Activated CD8-positive, alpha-beta T cell treated with anti-CD3 and anti-CD28 coated beads for 36 hours (primary cell): ENCODE measurements at regions of chr19 and their contacts with region 1.

Region 1: DNA sequence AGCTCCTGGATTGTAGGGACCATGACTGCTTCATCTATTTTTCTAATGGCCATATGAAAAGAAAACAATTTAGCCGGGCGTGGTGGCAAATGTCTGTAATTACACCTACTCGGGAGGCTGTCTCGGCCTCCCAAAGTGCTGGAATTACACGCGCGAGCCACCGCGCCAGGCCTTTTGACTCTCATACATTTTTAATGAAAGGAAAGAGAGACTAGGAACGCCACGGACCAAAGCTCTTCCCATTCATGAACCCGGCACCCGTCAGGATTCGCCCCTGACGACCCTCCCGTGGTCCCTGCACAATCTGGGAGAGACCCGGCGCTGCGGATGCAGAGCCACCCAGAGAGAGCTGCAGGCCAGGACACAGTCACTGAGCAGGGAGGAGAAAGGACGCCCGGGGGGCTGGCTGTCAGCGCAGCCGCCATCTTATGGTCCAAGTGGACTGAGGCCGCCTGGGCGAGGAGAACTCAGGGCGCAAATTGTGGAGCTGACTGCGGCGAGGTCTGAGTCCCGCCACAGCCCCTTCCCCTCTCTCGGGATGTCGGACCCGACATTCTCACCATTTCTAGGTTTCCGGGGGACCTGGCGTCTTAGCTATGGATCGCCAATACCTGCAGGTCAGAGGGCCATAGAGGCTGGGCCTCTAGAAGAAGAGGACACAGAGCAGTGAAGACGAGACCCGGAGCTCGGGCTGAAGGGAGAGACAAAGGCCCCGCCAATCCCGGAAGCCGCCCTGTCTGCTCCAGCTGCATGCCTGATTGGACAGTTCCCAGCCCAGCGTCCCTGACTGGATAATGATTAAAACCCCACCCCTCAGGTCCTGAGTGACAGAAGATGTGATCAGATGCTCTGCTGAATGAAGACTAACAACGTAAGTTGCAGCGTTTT is at the start of gene ZNF681:
- DNase-seq: peak; percentile 94
- ATAC-seq: peak; percentile 91
- H3K4me3 Mint-ChIP-seq: peak within 1 kb of the TSS; percentile 96
- H3K27ac Mint-ChIP-seq: peak within 1 kb of the TSS; percentile 93
- H3K4me1 Mint-ChIP-seq: peaks cover 25% of the 10 kb centered on the region
- H3K27me3 Mint-ChIP-seq: no peaks in the 10 kb centered on the region
- CTCF ChIP-seq: peak; percentile 51
- total RNA-seq, gene ZNF681: 5.0 to 6.4 TPM

Region 2: GRCh38 chr19:23547816-23548430 is 210.5 kb before region 1 on chr19:
- CTCF ChIA-PET with region 1: no interaction called
- POLR2A ChIA-PET with region 1: no interaction called
- intact Hi-C with region 1: no loop called
- DNase-seq: no peak
- ATAC-seq: no peak
- H3K4me3 Mint-ChIP-seq: no peak overlapping the region
- H3K27ac Mint-ChIP-seq: no peak overlapping the region
- H3K4me1 Mint-ChIP-seq: no peaks in the 10 kb centered on the region
- H3K27me3 Mint-ChIP-seq: no peaks in the 10 kb centered on the region
- CTCF ChIP-seq: no peak

Region 3: GRCh38 chr19:23686621-23687423 is 71.6 kb before region 1 on chr19 and contains the start of gene ZNF675:
- CTCF ChIA-PET with region 1: interaction called, 9 read pairs
- POLR2A ChIA-PET with region 1: interaction called, 15 read pairs
- intact Hi-C with region 1: loop called (anchors 5 kb)
- DNase-seq: peak; percentile 95
- ATAC-seq: peak; percentile 95
- H3K4me3 Mint-ChIP-seq: peak within 1 kb of the TSS; percentile 97
- H3K27ac Mint-ChIP-seq: peak within 1 kb of the TSS; percentile 98
- H3K4me1 Mint-ChIP-seq: peaks cover 38% of the 10 kb centered on the region
- H3K27me3 Mint-ChIP-seq: no peaks in the 10 kb centered on the region
- CTCF ChIP-seq: no peak
- total RNA-seq, gene ZNF675: 21.1 to 24.3 TPM

Region 4: DNA sequence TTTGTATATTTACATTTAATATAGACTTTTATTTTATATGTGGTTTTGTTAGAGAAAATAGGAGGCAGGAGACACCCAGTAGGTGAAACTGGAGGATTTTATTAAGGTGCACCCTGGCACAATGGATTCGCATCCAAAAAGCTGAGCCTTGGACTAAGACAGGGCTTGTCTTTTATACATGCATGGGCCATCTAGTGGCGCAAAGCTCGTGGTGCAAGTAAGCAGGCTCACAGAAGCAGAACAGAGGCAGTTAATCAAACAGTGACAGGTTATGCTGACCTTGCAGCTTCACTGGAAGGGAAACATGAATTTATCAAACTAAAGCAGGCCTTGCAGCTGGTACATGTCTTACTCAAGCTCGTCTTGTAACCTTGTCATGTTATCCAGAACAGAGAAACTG is 59.1 kb after region 1 on chr19:
- CTCF ChIA-PET with region 1: interaction called, 13 read pairs
- POLR2A ChIA-PET with region 1: interaction called, 3 read pairs
- intact Hi-C with region 1: no loop called
- DNase-seq: peak; percentile 73
- ATAC-seq: peak; percentile 66
- H3K4me3 Mint-ChIP-seq: no peak overlapping the region
- H3K27ac Mint-ChIP-seq: no peak overlapping the region
- H3K4me1 Mint-ChIP-seq: no peaks in the 10 kb centered on the region
- H3K27me3 Mint-ChIP-seq: no peaks in the 10 kb centered on the region
- CTCF ChIP-seq: peak; percentile 32